ENCODE measurements at regions of chr11 and their contacts with region 1.

Region 1: DNA sequence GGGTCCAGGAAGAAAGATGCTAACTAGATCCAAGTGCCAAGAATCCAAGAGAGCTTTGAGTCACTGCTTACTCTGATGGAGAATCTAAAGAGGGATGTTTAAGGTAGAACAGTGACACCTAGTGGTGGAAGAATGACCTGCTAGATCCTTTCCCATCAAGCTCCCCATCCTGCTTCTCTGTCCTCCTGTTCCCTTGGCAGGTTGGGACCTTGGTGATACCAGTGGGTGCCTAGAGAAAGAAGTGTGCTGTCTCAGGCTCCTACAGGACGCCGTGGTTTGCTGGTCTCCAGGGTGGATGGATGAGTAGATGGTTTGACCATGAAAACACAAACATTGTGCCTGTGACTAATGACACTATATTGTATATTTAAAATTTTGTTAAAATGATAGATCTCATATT is 383.7 kb downstream of the TMEM135 start:
- DNase-seq: peak in 1 of 3 donors; percentile 86
- ATAC-seq: peak; percentile 83
- H3K4me3 ChIP-seq: no peak overlapping the region
- H3K4me1 ChIP-seq: no peaks in the 10 kb centered on the region
- CTCF ChIP-seq: peak; percentile 39

Region 2: DNA sequence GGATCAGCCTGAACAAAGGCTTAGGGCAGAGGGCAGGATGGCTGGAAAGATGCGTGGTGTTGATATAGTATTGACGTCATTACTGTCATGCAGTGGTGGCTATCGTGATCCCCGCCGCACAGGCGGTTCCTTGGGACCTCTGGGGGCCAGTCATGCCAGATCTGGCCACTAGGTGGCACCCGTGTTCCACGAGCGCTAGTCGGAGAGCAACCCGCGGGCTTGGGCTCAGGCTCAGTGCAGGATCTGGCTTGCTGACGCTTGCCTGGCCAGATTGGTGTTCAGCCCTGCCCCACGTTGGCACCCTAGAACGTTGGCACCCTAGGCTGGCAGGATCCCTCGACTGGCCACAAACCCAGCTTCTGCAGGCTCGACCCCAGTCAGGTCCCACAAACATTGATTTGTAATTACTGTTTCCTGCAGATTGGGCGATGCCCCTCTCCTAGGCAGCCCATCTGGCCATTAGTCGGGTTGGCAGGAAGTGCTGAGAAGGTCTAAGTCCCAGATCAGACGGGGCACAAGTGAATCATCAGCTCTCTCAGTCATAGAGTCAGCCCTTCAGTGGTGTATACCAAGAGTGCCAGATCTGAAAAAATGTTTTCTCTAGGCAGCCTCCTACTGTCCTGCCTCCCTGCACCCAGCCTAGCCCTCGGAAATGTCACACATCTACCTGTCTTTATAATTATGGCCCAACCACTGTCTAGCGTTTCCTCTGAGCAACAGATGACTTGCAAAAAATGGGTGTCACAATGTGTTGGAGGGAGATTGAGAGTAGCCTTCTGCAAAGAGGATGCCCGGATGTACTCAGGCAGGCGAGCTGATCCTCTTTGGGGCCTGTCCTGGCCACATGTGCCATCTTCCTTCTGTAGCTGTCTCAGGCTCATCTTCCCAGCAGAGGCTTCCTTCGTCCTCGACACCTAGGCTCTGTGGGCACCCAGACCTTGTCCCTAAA is 68.4 kb before region 1 on chr11:
- intact Hi-C with region 1: loop called (anchors 5 kb)
- DNase-seq: peak; percentile 85 to 90 (median 89)
- ATAC-seq: peak; percentile 93
- H3K4me3 ChIP-seq: no peak overlapping the region
- H3K4me1 ChIP-seq: peaks cover 19% of the 10 kb centered on the region
- CTCF ChIP-seq: peak; percentile 95

Region 3: GRCh38 chr11:87361891-87362290 is 59.5 kb before region 1 on chr11:
- intact Hi-C with region 1: loop called in 1 of 2 experiments (anchors 5 kb)
- DNase-seq: no peak
- ATAC-seq: no peak
- H3K4me3 ChIP-seq: no peak overlapping the region
- H3K4me1 ChIP-seq: peaks cover 8% of the 10 kb centered on the region
- CTCF ChIP-seq: no peak

Region 4: GRCh38 chr11:87675993-87676392 is 254.6 kb after region 1 on chr11:
- intact Hi-C with region 1: no loop called
- DNase-seq: no peak
- ATAC-seq: no peak
- H3K4me3 ChIP-seq: no peak overlapping the region
- H3K4me1 ChIP-seq: no peaks in the 10 kb centered on the region
- CTCF ChIP-seq: no peak